Posterior vena cava (tissue), 2 donors: ENCODE measurements at regions of chr6 and their contacts with region 1.

Region 1: DNA sequence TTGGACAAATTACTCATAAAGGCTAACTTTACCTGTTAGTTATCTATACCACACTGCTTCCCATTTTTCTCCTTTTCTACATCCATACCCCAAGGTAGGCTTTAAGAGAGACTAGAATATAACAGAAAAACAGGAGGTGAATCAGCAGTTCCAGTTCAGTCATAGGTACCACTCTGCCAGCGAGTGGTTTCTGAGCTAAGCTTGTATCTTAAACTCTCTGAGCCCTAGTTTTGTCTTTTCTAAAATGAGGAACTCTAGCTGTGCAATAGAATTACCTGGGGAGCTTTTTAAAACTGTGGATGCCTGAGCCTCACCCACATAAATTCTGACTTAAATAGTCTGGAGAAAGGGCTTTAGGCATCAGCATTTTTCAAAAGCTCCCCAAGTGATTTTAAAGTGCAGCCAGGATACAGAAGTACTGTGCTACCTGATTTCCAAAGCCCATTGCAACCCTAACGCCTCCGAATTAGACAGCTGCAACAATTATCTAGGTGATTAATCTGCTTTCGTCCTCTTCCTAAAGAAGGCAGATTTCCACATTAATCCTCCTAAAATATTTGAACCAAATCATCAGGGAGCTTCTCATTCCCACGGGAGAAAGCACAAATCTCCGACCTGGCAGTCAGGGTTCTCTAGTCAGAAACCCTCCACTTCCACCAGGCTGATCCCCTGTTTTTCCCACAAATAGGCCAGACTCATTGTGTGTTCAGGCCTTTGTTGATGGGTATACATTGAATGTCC is 37.4 kb upstream of the RPL7L1 start:
- DNase-seq: no peak

Region 2: GRCh38 chr6:42555477-42556457 is 286.2 kb before region 1 on chr6:
- intact Hi-C with region 1: no loop called
- DNase-seq: no peak

Region 3: DNA sequence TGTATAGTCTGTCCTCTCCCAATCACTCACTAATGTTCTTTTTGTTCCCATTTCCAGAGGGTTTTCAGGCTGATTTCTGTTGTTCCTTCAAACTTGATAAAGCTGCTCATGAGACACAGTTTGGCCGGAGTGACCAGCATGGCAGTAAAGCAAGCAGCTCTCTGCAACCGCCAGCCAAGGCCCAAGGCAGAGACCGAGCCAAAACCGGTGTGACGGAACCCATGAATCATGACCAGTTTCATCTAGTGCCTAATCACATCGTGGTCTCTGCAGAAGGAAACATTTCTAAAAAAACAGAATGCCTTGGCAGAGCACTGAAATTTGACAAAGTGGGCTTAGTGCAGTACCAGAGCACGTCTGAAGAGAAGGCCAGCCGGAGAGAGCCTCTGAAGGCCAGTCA is 22.6 kb after region 1 on chr6:
- intact Hi-C with region 1: loop called in 1 of 2 experiments (anchors 2 kb)
- DNase-seq: peak; percentile 92

Region 4: GRCh38 chr6:42923666-42924065 is 81.7 kb after region 1 on chr6:
- intact Hi-C with region 1: no loop called
- DNase-seq: no peak

Region 5: GRCh38 chr6:43275801-43276576 is 434.0 kb after region 1 on chr6:
- intact Hi-C with region 1: no loop called
- DNase-seq: no peak